Heart left ventricle (tissue), 16 donors: ENCODE measurements at regions of chr17 and their contacts with region 1.

Region 1: GRCh38 chr17:49031965-49032928 is 35.1 kb downstream of the IGF2BP1 start:
- DNase-seq: peak in 1 of 5 donors; percentile 25
- ATAC-seq: peak in 3 of 4 donors; percentile 66 to 88 (median 69)
- H3K4me3 ChIP-seq: no peak overlapping the region
- H3K27ac ChIP-seq: no peak overlapping the region
- H3K4me1 ChIP-seq: peaks cover 0 to 3% (median 0%) of the 10 kb centered on the region in 12 donors
- H3K27me3 ChIP-seq: peaks cover 0 to 34% (median 3%) of the 10 kb centered on the region in 9 donors
- CTCF ChIP-seq: peak; percentile 69 to 81 (median 74)
- POLR2A ChIP-seq: no peak

Region 2: GRCh38 chr17:48678141-48678971 is 353.9 kb before region 1 on chr17:
- intact Hi-C with region 1: loop called in 9 of 10 experiments (anchors 5 to 10 kb)
- DNase-seq: peak; percentile 30 to 80 (median 48)
- ATAC-seq: peak in 3 of 4 donors; percentile 76 to 86 (median 82)
- H3K4me3 ChIP-seq: no peak overlapping the region
- H3K27ac ChIP-seq: no peak overlapping the region
- H3K4me1 ChIP-seq: peaks cover 0 to 6% (median 0%) of the 10 kb centered on the region in 12 donors
- H3K27me3 ChIP-seq: peaks cover 9 to 80% (median 32%) of the 10 kb centered on the region in 9 donors
- CTCF ChIP-seq: peak; percentile 83 to 98 (median 91)
- POLR2A ChIP-seq: no peak

Region 3: GRCh38 chr17:48804925-48805411 is 227.3 kb before region 1 on chr17:
- intact Hi-C with region 1: loop called in 9 of 10 experiments (anchors 5 to 10 kb)
- DNase-seq: peak in 4 of 5 donors; percentile 33 to 70 (median 44)
- ATAC-seq: peak in 3 of 4 donors; percentile 86 to 90 (median 87)
- H3K4me3 ChIP-seq: no peak overlapping the region
- H3K27ac ChIP-seq: no peak overlapping the region
- H3K4me1 ChIP-seq: peaks cover 0 to 8% (median 3%) of the 10 kb centered on the region in 12 donors
- H3K27me3 ChIP-seq: peaks cover 0 to 9% (median 0%) of the 10 kb centered on the region in 9 donors
- CTCF ChIP-seq: peak; percentile 81 to 95 (median 90)
- POLR2A ChIP-seq: no peak

Region 4: DNA sequence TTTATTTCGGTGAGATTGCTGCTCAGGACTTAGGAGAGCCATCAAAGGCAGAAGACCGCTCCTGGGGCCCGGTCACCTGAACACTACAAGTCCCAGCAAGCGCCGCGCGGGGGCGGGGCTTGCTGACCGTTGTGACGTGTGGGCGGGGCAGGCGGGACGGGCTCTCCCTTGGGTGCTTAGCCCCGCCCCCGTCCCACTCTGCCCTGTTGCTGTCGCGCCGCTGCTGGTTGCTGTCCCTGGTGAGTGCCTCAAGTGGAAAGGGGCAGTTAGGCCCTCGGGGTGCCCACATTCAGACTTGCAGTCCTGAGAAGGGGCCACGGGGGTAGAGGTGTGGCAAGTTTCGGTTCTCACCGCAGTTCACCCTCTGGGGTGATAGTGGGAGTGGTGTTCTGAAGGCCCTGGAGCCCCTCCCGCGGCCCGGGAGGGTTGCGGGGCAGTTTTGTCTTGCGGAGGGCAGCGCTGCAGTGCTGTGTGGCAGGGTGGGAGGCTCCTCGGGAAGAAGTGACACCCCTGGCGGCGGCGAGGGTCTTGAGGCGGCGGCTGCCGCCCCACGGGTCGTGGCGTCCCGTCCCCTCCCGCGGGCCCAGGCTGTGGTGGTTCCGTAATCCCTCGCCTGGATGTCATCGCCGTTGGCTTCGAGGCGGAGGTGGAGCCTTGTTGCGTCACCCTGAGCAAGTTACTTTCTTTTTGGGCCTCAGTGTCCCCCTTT is 201.3 kb before region 1 on chr17 and contains the start of gene CALCOCO2:
- intact Hi-C with region 1: no loop called
- DNase-seq: peak; percentile 94 to 97 (median 95)
- ATAC-seq: peak; percentile 93 to 98 (median 95)
- H3K4me3 ChIP-seq: peak within 1 kb of the TSS; percentile 69 to 99 (median 88)
- H3K27ac ChIP-seq: peak within 1 kb of the TSS; percentile 86 to 99 (median 97)
- H3K4me1 ChIP-seq: peaks cover 6 to 51% (median 43%) of the 10 kb centered on the region in 12 donors
- H3K27me3 ChIP-seq: no peaks in the 10 kb centered on the region
- CTCF ChIP-seq: peak in 2 of 12 donors; percentile 12 to 20
- POLR2A ChIP-seq: peak; percentile 89 to 96
- total RNA-seq, gene CALCOCO2: 174 to 322 (median 272) TPM

Region 5: DNA sequence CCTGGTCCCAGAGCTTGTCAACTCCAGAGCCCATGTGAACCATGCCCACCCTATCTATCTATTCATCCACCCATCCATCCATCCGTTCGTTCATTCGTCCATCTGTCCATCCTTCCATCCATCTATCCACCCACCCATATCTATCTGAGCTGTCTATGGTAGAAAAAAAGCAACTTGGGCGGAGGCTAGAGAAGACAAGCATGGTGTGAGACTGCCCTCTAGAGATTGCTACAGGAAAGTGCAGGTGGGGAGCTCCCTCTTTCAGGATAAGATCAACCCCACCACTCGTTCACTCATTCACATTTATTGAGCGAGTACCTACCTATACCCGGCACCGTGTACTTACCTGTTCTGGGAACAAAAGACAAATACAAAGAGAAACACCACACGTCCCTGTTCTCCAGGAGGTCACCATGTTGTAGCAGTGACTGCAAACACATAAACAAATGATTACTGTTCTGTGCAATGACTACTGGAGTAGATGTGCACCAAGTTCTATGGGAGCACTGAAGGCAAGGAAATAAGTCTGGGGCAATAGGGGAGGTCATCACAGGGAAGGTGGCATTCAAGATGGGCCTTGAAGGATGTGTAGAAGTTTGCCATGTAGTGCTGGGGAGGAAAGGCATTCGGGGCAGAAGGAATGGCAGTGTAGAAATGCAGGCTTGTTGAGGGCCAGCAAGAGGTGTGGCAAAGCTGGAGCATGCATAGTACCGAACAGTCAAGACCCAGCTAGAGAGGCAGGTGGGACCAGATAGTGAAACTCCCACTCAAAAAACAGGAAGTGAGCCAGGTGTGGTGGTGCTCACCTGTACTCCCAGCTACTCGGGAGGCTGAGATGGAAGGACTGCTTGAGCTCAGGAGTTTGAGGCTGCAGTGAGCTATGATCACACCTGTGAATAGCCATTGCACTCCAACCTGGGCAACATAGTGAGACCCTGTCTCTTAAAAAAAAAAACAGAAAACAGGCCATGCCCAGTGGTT is 153.0 kb before region 1 on chr17:
- intact Hi-C with region 1: loop called in 4 of 10 experiments (anchors 5 to 10 kb)
- DNase-seq: peak in 2 of 5 donors; percentile 42 to 54
- ATAC-seq: peak; percentile 62 to 88 (median 86)
- H3K4me3 ChIP-seq: no peak overlapping the region
- H3K27ac ChIP-seq: no peak overlapping the region
- H3K4me1 ChIP-seq: peaks cover 0 to 6% (median 0%) of the 10 kb centered on the region in 12 donors
- H3K27me3 ChIP-seq: no peaks in the 10 kb centered on the region
- CTCF ChIP-seq: peak; percentile 84 to 96 (median 92)
- POLR2A ChIP-seq: no peak

Region 6: DNA sequence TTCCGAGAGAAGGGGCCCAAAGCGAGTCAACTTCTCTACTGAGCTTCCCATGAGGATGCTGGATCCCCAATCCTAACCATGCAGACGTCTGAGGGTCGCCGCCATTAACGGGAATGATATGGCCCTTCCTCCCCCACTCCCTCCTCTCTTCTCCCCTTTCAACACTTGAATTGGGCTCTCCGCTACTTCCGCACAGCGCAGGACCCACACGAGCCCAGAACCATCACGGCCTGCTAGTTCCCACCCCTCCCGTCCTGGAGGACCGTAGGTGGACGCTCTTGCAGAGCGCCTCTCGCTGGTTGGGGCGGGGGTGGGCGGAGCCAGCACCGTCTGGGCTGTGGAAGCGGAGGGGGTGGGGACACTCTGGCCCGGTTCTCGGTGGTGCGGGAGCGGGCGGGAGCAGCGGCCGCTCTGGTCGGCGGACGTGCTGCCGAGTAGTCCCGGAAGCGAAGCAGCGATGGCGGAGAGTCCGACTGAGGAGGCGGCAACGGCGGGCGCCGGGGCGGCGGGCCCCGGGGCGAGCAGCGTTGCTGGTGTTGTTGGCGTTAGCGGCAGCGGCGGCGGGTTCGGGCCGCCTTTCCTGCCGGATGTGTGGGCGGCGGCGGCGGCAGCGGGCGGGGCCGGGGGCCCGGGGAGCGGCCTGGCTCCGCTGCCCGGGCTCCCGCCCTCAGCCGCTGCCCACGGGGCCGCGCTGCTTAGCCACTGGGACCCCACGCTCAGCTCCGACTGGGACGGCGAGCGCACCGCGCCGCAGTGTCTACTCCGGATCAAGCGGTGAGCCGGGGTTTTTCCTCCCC is 124.0 kb before region 1 on chr17 and contains the start of gene UBE2Z:
- intact Hi-C with region 1: loop called in 1 of 10 experiments (anchors 10 kb)
- DNase-seq: peak; percentile 95 to 96 (median 95)
- ATAC-seq: peak; percentile 98 to 99 (median 98)
- H3K4me3 ChIP-seq: peak within 1 kb of the TSS; percentile 57 to 99 (median 87)
- H3K27ac ChIP-seq: peak within 1 kb of the TSS; percentile 52 to 98 (median 94)
- H3K4me1 ChIP-seq: peaks cover 0 to 44% (median 27%) of the 10 kb centered on the region in 12 donors
- H3K27me3 ChIP-seq: no peaks in the 10 kb centered on the region
- CTCF ChIP-seq: peak in 5 of 12 donors; percentile 14 to 63 (median 49)
- POLR2A ChIP-seq: peak in 1 of 2 donors; percentile 88
- total RNA-seq, gene UBE2Z: 31.1 to 59.0 (median 41.0) TPM